ENCODE measurements at regions of chr6 and their contacts with region 1.

Region 1: GRCh38 chr6:108782179-108783041 is 65.8 kb upstream of the ARMC2 start:
- DNase-seq: peak; percentile 79 to 94 (median 88)

Region 2: DNA sequence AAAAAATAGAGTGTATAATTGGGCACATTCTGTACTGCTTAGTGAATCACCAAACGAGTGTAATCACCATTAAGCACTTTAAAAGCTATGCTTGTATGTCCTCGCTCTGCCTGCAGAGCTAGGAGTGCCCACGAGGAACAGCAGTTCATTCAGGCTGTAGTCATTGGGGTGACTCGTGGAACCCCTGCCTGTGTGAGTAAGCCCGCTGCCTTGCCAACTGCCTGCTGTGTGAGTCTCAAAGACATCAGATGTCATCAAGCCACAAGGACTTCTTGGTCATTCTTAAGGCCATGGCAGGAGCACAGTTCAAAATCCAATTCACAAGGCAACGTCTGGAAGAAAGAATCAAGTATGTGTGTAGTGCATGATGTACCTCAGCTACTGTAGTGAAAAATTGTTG is 161.3 kb before region 1 on chr6:
- intact Hi-C with region 1: no loop called
- DNase-seq: peak in 16 of 42 donors; percentile 7 to 85 (median 50)

Region 3: GRCh38 chr6:108848116-108848868 is 65.9 kb after region 1 on chr6 and contains the start of gene ARMC2:
- intact Hi-C with region 1: loop called (anchors 10 kb)
- DNase-seq: peak; percentile 76 to 97 (median 92)

Measured in head of caudate nucleus (tissue), 42 donors.